HepG2 (cell line): ENCODE measurements at regions of chr17 and their contacts with region 1.

Region 1: DNA sequence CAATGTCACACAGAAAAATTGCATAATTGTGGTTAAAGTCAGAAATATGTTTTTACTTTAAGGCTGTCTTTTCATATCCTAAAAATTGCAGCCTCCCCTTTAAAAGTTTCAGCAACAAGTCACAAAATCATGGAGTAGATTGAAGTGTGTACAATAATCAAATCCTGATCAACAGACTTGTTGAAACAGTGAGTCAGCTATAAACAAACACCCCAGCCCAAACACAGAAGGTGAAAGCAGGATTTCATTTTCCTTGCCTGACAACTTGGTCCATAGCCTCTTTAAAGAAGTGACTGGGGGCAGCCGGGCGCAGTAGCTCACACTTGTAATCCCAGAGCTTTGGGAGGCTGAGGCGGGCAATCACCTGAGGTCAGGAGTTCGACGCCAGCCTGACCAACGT is 59.9 kb downstream of the WNT3 start:
- DNase-seq: peak; percentile 40
- ATAC-seq: peak; percentile 74
- H3K4me3 ChIP-seq: no peak overlapping the region
- H3K27ac ChIP-seq: no peak overlapping the region
- H3K4me1 ChIP-seq: peaks cover 34% of the 10 kb centered on the region
- H3K27me3 ChIP-seq: no peaks in the 10 kb centered on the region
- CTCF ChIP-seq: no peak
- EP300 ChIP-seq: no peak
- POLR2A ChIP-seq: no peak
- RAD21 ChIP-seq: no peak

Region 2: DNA sequence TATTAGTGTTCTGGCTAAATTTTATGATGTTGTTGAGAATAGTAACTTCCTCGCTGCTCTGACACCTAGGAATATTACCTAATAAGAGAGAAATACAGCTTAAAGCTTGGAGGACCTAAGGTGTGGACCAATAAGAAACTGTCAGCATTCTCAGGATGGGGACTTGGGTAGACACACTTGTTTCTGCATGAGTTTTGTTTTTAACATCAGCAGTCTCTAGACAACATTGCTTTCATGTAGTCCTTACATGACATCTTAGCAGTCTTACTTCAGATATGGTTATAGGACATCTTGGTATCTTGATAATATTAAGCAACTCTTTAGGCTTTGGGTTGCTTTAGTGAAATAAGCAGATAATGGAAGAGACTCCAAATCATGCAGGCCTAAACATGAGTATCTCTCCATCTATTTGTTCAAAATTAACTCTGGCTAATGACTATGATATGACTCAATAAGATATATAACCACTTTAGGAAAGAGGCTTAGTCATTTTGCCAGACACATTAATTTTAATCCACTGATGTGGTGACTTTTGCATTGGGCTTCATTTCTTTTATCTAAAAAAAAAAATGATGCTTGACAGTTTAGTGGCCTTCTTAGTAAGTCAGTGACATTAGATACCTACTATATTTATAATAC is 24.7 kb before region 1 on chr17:
- CTCF ChIA-PET with region 1: no interaction called
- POLR2A ChIA-PET with region 1: no interaction called
- in situ Hi-C with region 1: no loop called
- intact Hi-C with region 1: no loop called
- DNase-seq: no peak
- ATAC-seq: no peak
- H3K4me3 ChIP-seq: no peak overlapping the region
- H3K27ac ChIP-seq: no peak overlapping the region
- H3K4me1 ChIP-seq: no peaks in the 10 kb centered on the region
- H3K27me3 ChIP-seq: no peaks in the 10 kb centered on the region
- CTCF ChIP-seq: no peak
- EP300 ChIP-seq: no peak
- POLR2A ChIP-seq: no peak
- RAD21 ChIP-seq: no peak

Region 3: GRCh38 chr17:46770818-46771560 is 12.4 kb after region 1 on chr17:
- CTCF ChIA-PET with region 1: no interaction called
- POLR2A ChIA-PET with region 1: interaction called, 12 read pairs
- in situ Hi-C with region 1: no loop called
- intact Hi-C with region 1: no loop called
- DNase-seq: peak; percentile 50
- ATAC-seq: peak; percentile 78
- H3K4me3 ChIP-seq: peak overlapping the region; percentile 36 to 77 (median 71)
- H3K27ac ChIP-seq: peak overlapping the region; percentile 91
- H3K4me1 ChIP-seq: peaks cover 55% of the 10 kb centered on the region
- H3K27me3 ChIP-seq: no peaks in the 10 kb centered on the region
- CTCF ChIP-seq: no peak
- EP300 ChIP-seq: no peak
- POLR2A ChIP-seq: peak; percentile 67 to 72; a peak in 3 of 4 replicates
- RAD21 ChIP-seq: peak; percentile 43; the same call in 1 of the 2 replicates

Region 4: DNA sequence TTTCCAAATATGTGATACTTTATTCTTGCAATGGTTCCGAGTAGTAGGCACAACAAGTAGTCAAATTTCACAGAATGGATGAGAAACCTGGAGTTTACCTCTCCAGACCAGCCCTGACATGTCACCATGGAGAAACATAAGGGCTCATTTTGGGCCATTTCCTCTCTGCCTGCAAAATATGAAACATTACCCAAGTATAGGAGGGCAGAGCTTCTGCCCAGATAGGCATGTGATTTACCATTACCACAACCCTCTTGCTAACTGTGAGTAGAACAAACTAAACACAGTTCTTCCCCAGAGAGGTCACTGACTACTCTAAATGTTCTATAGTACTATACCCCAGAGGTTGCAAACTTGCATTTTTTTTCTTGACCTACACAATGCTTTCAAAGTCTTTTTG is 875.4 kb after region 1 on chr17:
- CTCF ChIA-PET with region 1: no interaction called
- POLR2A ChIA-PET with region 1: no interaction called
- in situ Hi-C with region 1: no loop called
- intact Hi-C with region 1: no loop called
- DNase-seq: no peak
- ATAC-seq: no peak
- H3K4me3 ChIP-seq: no peak overlapping the region
- H3K27ac ChIP-seq: no peak overlapping the region
- H3K4me1 ChIP-seq: no peaks in the 10 kb centered on the region
- H3K27me3 ChIP-seq: no peaks in the 10 kb centered on the region
- CTCF ChIP-seq: no peak
- EP300 ChIP-seq: no peak
- POLR2A ChIP-seq: no peak
- RAD21 ChIP-seq: no peak